IMR-90 (cell line): ENCODE measurements at regions of chr3 and their contacts with region 1.

Region 1: GRCh38 chr3:186854954-186855353 is 12.4 kb downstream of the ADIPOQ start:
- DNase-seq: no peak
- ATAC-seq: no peak
- H3K4me3 ChIP-seq: no peak overlapping the region
- H3K27ac ChIP-seq: no peak overlapping the region
- H3K4me1 ChIP-seq: no peaks in the 10 kb centered on the region
- H3K27me3 ChIP-seq: peaks cover 13% of the 10 kb centered on the region
- CTCF ChIP-seq: no peak
- POLR2A ChIP-seq: no peak
- RAD21 ChIP-seq: no peak

Region 2: GRCh38 chr3:187150599-187150998 is 295.6 kb after region 1 on chr3:
- CTCF ChIA-PET with region 1: no interaction called
- POLR2A ChIA-PET with region 1: no interaction called
- dilution Hi-C with region 1: no loop called
- in situ Hi-C with region 1: no loop called
- intact Hi-C with region 1: loop called (anchors 5 kb)
- DNase-seq: no peak
- ATAC-seq: no peak
- H3K4me3 ChIP-seq: no peak overlapping the region
- H3K27ac ChIP-seq: no peak overlapping the region
- H3K4me1 ChIP-seq: no peaks in the 10 kb centered on the region
- H3K27me3 ChIP-seq: peaks cover 7% of the 10 kb centered on the region
- CTCF ChIP-seq: no peak
- POLR2A ChIP-seq: no peak
- RAD21 ChIP-seq: no peak